Heart right ventricle (tissue), 16 donors: ENCODE measurements at regions of chr20 and their contacts with region 1.

Region 1: DNA sequence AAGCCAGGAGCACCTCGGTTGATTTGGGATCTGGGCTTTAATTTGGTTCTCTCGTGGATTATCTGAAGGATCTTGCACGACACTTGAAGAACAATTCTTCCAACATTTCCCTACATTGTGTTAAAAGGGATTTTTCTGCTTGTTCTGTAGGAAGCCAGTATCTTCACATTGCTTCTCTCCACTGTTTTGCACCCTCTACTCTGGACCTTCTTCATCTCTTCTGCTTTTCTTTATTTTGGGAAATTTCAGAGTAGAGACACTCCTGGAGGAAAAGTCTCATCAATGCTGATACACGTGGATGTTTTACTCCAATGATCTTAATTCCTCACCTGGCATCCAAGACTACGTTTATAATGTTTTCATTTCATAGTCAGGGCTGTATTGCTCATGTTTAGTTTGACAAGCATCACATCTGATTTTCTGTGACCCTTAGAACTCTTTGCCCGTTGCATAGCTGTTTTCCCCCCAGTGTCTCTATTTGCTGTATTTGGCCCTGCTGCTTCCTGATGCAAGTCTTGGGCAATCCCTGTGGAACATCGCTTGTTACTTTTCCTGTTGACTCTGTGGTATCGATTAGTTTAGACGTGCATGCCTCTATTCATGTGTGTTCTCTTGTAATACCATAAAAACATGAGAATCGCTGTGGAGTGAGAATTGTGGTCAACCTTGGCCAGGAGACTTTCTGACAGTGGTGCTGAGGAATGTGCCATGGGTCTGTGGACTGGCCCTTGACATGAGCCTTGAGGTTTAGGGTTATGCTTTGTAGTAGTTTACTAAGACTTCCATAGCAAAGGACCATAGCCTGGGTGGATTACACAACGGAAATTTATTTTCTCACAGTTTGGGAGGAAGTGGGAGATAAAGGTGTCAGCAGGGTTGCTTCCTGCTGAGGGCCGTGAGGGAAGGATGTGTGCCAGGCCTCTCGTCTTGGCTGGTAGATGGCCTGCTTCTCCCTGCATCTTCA is 12.5 kb downstream of the PLCB1 start:
- DNase-seq: no peak
- ATAC-seq: peak in 5 of 8 donors; percentile 25 to 49 (median 35)
- H3K4me3 ChIP-seq: no peak overlapping the region
- H3K27ac ChIP-seq: peak overlapping the region in 3 of 10 donors; percentile 34 to 46 (median 37)
- H3K4me1 ChIP-seq: peaks cover 3 to 52% (median 32%) of the 10 kb centered on the region in 9 donors
- H3K27me3 ChIP-seq: no peaks in the 10 kb centered on the region
- CTCF ChIP-seq: no peak

Region 2: DNA sequence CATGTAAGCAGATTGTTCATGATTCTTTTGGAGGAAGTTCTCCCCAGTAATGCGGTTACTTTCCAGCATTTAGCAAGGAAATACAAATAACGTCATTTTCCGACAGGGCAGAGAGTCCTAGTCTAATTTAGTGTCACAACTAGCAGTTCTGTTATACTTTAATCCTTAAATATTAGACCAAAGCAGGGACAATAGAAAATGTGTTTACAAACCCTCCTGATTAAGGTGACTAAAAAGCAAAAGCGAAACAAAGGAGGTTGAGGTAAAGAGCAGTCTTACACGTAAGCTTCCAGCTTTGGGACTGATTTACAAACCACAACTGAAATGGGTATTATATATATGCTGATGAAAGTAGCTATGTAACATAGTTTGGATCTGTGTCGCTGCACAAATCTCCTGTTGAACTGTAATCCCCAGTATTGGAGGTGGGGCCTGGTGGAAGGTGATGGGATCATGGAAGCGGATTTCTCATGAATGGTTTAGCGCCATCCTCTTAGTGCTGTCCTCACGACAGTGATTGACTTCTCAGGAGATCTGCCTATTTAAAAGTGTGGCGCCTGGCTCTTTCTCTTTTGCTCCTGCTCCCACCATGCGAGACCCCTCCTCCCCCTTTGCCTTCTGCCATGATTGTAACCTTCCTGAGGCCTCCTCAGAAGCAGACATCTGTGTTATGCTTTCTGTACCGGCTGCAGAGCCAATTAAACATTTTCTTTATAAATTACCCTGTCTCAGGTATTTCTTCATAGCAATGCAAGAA is 69.4 kb after region 1 on chr20:
- intact Hi-C with region 1: loop called in 1 of 10 experiments (anchors 5 kb)
- DNase-seq: no peak
- ATAC-seq: peak in 4 of 8 donors; percentile 66 to 74 (median 70)
- H3K4me3 ChIP-seq: peak overlapping the region in 6 of 10 donors; percentile 16 to 38 (median 26)
- H3K27ac ChIP-seq: peak overlapping the region in 9 of 10 donors; percentile 37 to 79 (median 69)
- H3K4me1 ChIP-seq: peaks cover 0 to 51% (median 29%) of the 10 kb centered on the region in 9 donors
- H3K27me3 ChIP-seq: no peaks in the 10 kb centered on the region
- CTCF ChIP-seq: no peak